Activated CD8-positive, alpha-beta T cell treated with anti-CD3 and anti-CD28 coated beads, Interleukin-2, amount 10 ng/mL, durations not matched to agents 7 days and 5 days (primary cell): ENCODE measurements at regions of chr6 and their contacts with region 1.

Region 1: DNA sequence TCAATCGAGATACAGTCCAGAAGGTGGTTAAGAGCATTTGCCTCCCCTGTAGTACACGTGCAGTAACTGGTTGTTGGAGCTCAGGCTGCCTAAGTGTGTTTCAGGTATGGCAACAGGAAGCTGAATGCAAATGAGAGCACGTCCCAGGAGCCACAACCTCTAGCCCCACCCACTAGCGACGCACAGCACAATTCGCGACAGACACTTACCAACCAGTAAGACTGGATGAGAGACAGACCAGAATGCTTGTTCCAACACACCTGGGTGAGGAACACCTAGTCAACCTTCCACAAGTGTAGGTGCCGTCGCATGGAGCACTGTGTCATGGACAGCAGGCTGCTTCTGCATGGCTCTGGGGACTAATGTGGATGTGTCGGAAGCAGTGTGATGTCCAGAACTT is 7.2 kb upstream of the SERPINB1 start:
- DNase-seq: peak; percentile 81
- ATAC-seq: peak; percentile 72
- H3K4me3 Mint-ChIP-seq: peak overlapping the region; percentile 3
- H3K27ac Mint-ChIP-seq: peak overlapping the region; percentile 68
- H3K4me1 Mint-ChIP-seq: peaks cover 53% of the 10 kb centered on the region
- H3K27me3 Mint-ChIP-seq: no peaks in the 10 kb centered on the region

Region 2: GRCh38 chr6:2714111-2714895 is 134.5 kb before region 1 on chr6:
- CTCF ChIA-PET with region 1: no interaction called
- POLR2A ChIA-PET with region 1: no interaction called
- DNase-seq: no peak
- ATAC-seq: no peak
- H3K4me3 Mint-ChIP-seq: no peak overlapping the region
- H3K27ac Mint-ChIP-seq: no peak overlapping the region
- H3K4me1 Mint-ChIP-seq: no peaks in the 10 kb centered on the region
- H3K27me3 Mint-ChIP-seq: peaks cover 6% of the 10 kb centered on the region

Region 3: DNA sequence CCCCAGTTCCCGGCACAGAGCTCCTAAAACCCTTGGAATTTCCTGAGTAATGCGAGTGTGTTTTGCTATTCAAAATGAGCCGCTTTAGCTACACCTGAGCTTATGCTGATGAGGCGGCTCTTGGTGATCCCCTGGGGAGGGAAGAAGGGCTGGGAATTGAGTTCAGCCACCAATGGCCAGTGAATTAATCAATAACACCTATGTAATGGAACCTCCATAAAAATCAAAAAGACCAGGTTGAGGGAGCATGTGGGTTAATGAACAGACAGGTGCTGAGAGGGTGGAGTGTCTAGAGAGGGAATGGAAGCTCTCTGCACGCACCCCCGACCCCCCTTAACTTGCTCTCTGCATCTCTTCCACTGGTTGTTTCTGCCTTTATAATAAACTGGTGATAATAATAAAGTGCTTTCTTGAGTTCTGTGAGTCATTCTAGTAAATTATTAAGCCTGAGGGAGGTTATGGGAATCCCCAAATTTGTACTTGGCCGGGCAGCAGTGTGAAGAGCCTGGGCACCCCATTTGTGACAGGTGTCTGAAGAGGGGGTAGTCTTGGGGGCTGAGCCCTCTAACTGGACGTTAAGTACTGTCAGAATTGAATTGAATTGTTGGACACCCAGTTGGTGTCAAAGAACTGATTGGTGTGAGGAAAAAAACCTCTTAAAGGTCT is 17.5 kb after region 1 on chr6:
- CTCF ChIA-PET with region 1: interaction called, 32 read pairs
- POLR2A ChIA-PET with region 1: interaction called, 18 read pairs
- DNase-seq: no peak
- ATAC-seq: no peak
- H3K4me3 Mint-ChIP-seq: no peak overlapping the region
- H3K27ac Mint-ChIP-seq: no peak overlapping the region
- H3K4me1 Mint-ChIP-seq: peaks cover 60% of the 10 kb centered on the region
- H3K27me3 Mint-ChIP-seq: no peaks in the 10 kb centered on the region

Region 4: GRCh38 chr6:2900821-2901644 is 52.2 kb after region 1 on chr6:
- CTCF ChIA-PET with region 1: interaction called, 48 read pairs
- POLR2A ChIA-PET with region 1: interaction called, 6 read pairs
- DNase-seq: peak; percentile 21
- ATAC-seq: no peak
- H3K4me3 Mint-ChIP-seq: peak overlapping the region; percentile 94
- H3K27ac Mint-ChIP-seq: peak overlapping the region; percentile 62
- H3K4me1 Mint-ChIP-seq: peaks cover 53% of the 10 kb centered on the region
- H3K27me3 Mint-ChIP-seq: no peaks in the 10 kb centered on the region

Region 5: GRCh38 chr6:2917065-2917464 is 68.2 kb after region 1 on chr6:
- CTCF ChIA-PET with region 1: interaction called, 83 read pairs
- POLR2A ChIA-PET with region 1: interaction called, 3 read pairs
- DNase-seq: peak; percentile 18
- ATAC-seq: no peak
- H3K4me3 Mint-ChIP-seq: no peak overlapping the region
- H3K27ac Mint-ChIP-seq: no peak overlapping the region
- H3K4me1 Mint-ChIP-seq: peaks cover 24% of the 10 kb centered on the region
- H3K27me3 Mint-ChIP-seq: peaks cover 3% of the 10 kb centered on the region

Region 6: GRCh38 chr6:2940010-2940850 is 91.4 kb after region 1 on chr6:
- CTCF ChIA-PET with region 1: interaction called, 267 read pairs
- POLR2A ChIA-PET with region 1: interaction called, 9 read pairs
- DNase-seq: peak; percentile 87
- ATAC-seq: peak; percentile 85
- H3K4me3 Mint-ChIP-seq: peak overlapping the region; percentile 74
- H3K27ac Mint-ChIP-seq: peak overlapping the region; percentile 94
- H3K4me1 Mint-ChIP-seq: peaks cover 68% of the 10 kb centered on the region
- H3K27me3 Mint-ChIP-seq: no peaks in the 10 kb centered on the region

Region 7: DNA sequence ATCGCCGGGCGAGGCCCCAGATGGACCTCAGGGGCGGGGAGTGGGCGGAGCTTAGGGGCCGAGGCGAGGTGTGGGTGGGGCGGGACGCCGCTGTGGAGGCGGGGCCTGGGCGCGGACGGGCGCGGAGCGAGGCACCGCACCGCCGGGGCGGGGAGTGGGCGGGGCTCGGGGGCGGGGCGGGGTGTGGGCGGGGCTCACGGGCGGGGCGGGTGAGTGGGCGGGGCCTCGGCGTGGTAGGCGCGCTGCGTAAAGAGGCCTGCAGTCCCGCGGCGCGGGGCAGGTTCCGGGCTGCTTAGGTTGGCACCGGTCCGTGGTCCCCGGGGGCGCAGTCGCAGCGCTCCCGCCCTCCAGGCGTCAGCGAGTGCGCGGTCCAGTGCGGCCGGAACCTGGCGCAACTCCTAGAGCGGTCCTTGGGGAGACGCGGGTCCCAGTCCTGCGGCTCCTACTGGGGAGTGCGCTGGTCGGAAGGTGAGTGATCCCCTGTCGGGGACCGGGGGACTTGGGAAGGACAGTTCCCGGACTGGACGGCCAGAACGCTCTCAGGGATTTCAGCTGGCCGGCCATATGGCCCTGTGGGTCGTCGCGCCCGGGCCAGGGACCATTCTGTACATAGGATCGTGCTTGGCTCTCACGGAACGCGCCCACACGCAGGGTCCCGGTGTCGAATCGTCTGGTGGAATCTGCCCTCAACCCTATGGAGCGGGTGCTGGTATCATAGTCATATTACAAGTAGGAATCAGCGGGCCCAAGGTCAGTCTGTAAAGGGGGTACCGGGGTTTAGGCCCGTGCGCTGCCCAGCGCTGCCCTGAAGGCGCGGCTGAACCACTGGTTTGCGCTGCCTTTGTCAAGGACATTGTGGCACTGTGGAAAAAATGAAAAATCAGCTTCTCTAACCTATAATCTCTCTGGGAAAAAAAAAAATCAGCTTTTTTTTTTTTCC is 151.0 kb after region 1 on chr6 and contains the start of gene NQO2:
- CTCF ChIA-PET with region 1: interaction called, 10 read pairs
- POLR2A ChIA-PET with region 1: no interaction called
- DNase-seq: peak; percentile 93
- ATAC-seq: peak; percentile 89
- H3K4me3 Mint-ChIP-seq: peak within 1 kb of the TSS; percentile 86
- H3K27ac Mint-ChIP-seq: peak within 1 kb of the TSS; percentile 83
- H3K4me1 Mint-ChIP-seq: peaks cover 35% of the 10 kb centered on the region
- H3K27me3 Mint-ChIP-seq: no peaks in the 10 kb centered on the region
- total RNA-seq, gene NQO2: 21.2 to 21.4 TPM